CD4-positive, alpha-beta memory T cell (primary cell): ENCODE measurements at regions of chr4 and their contacts with region 1.

Region 1: DNA sequence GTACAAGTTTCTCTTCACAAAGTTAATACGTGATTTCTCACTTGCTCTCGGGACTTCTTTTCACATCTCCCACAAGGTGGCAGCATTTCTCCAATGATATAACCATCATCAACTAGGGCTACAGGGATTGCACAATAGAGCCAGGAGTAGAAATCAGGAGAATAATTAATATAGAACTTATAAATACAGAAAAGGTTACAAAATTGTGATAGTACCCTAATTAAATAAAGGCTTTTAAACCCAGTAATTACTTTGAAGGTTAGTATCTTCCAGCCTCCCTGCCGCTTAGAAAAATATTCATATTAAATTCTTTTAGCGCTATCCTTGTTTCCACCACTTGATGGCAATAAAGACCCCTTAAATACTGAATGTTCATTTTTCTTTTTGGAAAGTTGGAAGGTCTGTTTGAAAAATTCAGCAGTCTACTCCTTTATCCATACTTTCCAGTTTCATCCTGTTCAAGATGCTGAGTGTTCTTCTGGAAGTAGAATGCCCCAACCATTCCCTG is 65.8 kb downstream of the RASGEF1B start:
- DNase-seq: peak; percentile 46 to 74 (median 70)
- H3K4me3 ChIP-seq: no peak overlapping the region
- H3K4me3 Mint-ChIP-seq: peak overlapping the region in 3 of 8 donors; percentile 0 to 52 (median 35)
- H3K27ac ChIP-seq: no peak overlapping the region
- H3K27ac Mint-ChIP-seq: no peak overlapping the region
- H3K4me1 ChIP-seq: peaks cover 6% of the 10 kb centered on the region
- H3K4me1 Mint-ChIP-seq: peaks cover 0 to 3% (median 1%) of the 10 kb centered on the region in 4 donors
- H3K27me3 ChIP-seq: no peaks in the 10 kb centered on the region
- H3K27me3 Mint-ChIP-seq: peaks cover 1 to 2% of the 10 kb centered on the region in 2 donors

Region 2: GRCh38 chr4:81844717-81845116 is 438.8 kb after region 1 on chr4:
- CTCF ChIA-PET with region 1: interaction called, 5 read pairs
- POLR2A ChIA-PET with region 1: no interaction called
- intact Hi-C with region 1: loop called (anchors 1 kb)
- DNase-seq: peak; percentile 64 to 73 (median 71)
- H3K4me3 ChIP-seq: no peak overlapping the region
- H3K4me3 Mint-ChIP-seq: no peak overlapping the region
- H3K27ac ChIP-seq: no peak overlapping the region
- H3K27ac Mint-ChIP-seq: no peak overlapping the region
- H3K4me1 ChIP-seq: no peaks in the 10 kb centered on the region
- H3K4me1 Mint-ChIP-seq: no peaks in the 10 kb centered on the region
- H3K27me3 ChIP-seq: no peaks in the 10 kb centered on the region
- H3K27me3 Mint-ChIP-seq: no peaks in the 10 kb centered on the region

Region 3: GRCh38 chr4:81913427-81913879 is 507.5 kb after region 1 on chr4:
- CTCF ChIA-PET with region 1: interaction called, 4 read pairs
- POLR2A ChIA-PET with region 1: no interaction called
- intact Hi-C with region 1: loop called (anchors 2 kb)
- DNase-seq: peak; percentile 39 to 55 (median 52)
- H3K4me3 ChIP-seq: no peak overlapping the region
- H3K4me3 Mint-ChIP-seq: peak overlapping the region in 1 of 8 donors; percentile 50
- H3K27ac ChIP-seq: no peak overlapping the region
- H3K27ac Mint-ChIP-seq: no peak overlapping the region
- H3K4me1 ChIP-seq: no peaks in the 10 kb centered on the region
- H3K4me1 Mint-ChIP-seq: peaks cover 6 to 9% (median 7%) of the 10 kb centered on the region in 4 donors
- H3K27me3 ChIP-seq: no peaks in the 10 kb centered on the region
- H3K27me3 Mint-ChIP-seq: peaks cover 5 to 9% of the 10 kb centered on the region in 2 donors

Region 4: DNA sequence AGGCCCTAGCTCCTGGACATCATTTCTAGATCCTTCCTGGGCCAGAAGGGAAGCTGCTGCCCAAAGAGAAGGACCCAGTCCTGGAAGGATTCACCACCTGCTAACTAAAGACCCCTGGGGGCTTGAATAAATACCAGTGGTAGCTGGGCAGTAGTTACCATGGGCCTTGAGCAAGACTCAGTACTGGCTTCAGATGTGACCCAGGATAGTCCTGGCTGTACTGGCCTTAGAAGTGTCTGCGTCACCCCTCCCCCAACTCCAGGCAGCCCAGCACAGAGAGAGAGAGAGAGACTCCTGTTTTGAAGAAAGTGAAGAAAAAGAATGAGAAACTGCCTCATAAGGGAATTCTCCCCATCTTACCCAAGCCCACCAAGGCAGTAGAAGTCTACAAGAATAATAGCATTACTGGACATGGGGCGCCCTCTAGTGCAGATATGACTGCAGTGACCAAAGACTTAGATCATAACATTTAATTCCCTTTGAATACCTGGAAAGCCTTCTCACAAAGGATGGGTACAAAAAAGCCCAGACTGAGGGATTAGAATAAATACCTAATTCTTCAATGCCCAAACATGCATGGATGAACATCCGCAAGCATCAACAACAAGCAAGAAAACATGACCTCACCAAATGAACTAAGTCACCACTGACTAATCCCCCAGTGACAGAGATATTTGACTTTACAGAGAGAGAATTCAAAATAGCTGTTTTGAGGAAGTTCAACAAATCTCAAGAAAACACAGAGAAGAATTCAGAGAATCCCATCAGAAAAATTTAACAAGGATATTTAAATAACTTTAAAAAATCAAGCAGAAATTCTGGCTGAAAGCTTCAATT is 796.1 kb after region 1 on chr4:
- CTCF ChIA-PET with region 1: interaction called, 3 read pairs
- POLR2A ChIA-PET with region 1: no interaction called
- intact Hi-C with region 1: loop called (anchors 1 kb)
- DNase-seq: peak; percentile 39 to 52 (median 49)
- H3K4me3 ChIP-seq: no peak overlapping the region
- H3K4me3 Mint-ChIP-seq: no peak overlapping the region
- H3K27ac ChIP-seq: no peak overlapping the region
- H3K27ac Mint-ChIP-seq: no peak overlapping the region
- H3K4me1 ChIP-seq: no peaks in the 10 kb centered on the region
- H3K4me1 Mint-ChIP-seq: peaks cover 0 to 10% (median 3%) of the 10 kb centered on the region in 4 donors
- H3K27me3 ChIP-seq: no peaks in the 10 kb centered on the region
- H3K27me3 Mint-ChIP-seq: peaks cover 5 to 6% of the 10 kb centered on the region in 2 donors

Region 5: GRCh38 chr4:82217986-82218715 is 812.2 kb after region 1 on chr4:
- CTCF ChIA-PET with region 1: no interaction called
- POLR2A ChIA-PET with region 1: no interaction called
- intact Hi-C with region 1: loop called (anchors 5 kb)
- DNase-seq: peak in 4 of 5 donors; percentile 10 to 22 (median 17)
- H3K4me3 ChIP-seq: no peak overlapping the region
- H3K4me3 Mint-ChIP-seq: no peak overlapping the region
- H3K27ac ChIP-seq: no peak overlapping the region
- H3K27ac Mint-ChIP-seq: peak overlapping the region in 1 of 7 donors; percentile 32
- H3K4me1 ChIP-seq: peaks cover 15% of the 10 kb centered on the region
- H3K4me1 Mint-ChIP-seq: peaks cover 13 to 24% (median 15%) of the 10 kb centered on the region in 4 donors
- H3K27me3 ChIP-seq: no peaks in the 10 kb centered on the region
- H3K27me3 Mint-ChIP-seq: no peaks in the 10 kb centered on the region

Region 6: DNA sequence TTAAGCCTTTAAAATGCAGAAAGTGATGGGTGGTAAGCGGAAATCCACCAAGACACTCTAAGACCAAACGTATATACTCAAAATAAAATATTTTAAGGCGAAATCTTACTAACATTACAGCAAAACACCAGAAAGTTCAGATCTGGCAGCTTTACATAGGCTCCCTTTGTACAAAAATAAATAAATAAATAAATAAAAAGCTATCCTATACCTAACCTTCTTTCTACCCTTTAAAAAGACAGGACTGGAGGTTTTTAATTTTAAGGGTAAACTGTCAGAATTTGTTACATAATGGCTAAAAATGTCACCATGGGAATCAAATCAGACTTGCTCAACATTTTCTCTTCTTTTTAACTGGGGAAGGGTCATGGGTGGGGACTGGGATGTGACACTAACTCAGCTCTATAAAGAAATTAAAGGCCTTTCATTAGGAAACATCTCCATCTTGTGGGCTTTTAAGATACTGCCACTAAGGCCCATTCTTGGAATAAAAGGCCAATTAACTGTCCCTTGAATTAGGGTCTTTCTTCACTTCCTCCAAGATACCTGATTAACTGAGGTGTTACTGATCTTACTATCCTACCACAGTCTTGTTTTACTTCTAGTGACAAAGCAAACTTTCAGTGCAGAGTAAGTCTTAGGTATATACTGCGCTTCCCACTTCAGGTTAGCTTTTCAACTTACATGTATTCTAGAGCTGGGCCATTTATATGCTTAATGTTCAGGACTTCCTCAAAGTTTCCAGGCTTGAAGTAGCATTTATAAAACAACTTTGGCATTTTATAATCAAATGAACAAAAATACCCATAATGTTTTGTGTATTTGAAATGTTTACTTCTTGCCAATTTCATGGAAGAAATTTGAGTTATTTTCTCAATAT is 954.6 kb after region 1 on chr4:
- CTCF ChIA-PET with region 1: no interaction called
- POLR2A ChIA-PET with region 1: no interaction called
- intact Hi-C with region 1: loop called (anchors 1 kb)
- DNase-seq: peak in 4 of 5 donors; percentile 39 to 42 (median 40)
- H3K4me3 ChIP-seq: no peak overlapping the region
- H3K4me3 Mint-ChIP-seq: peak overlapping the region in 5 of 8 donors; percentile 3 to 54 (median 17)
- H3K27ac ChIP-seq: peak overlapping the region; percentile 22
- H3K27ac Mint-ChIP-seq: peak overlapping the region; percentile 30 to 88 (median 62)
- H3K4me1 ChIP-seq: peaks cover 98% of the 10 kb centered on the region
- H3K4me1 Mint-ChIP-seq: peaks cover 59 to 94% (median 77%) of the 10 kb centered on the region in 4 donors
- H3K27me3 ChIP-seq: no peaks in the 10 kb centered on the region
- H3K27me3 Mint-ChIP-seq: no peaks in the 10 kb centered on the region